Panc1 (cell line): ENCODE measurements at regions of chr4 and their contacts with region 1.

Region 1: DNA sequence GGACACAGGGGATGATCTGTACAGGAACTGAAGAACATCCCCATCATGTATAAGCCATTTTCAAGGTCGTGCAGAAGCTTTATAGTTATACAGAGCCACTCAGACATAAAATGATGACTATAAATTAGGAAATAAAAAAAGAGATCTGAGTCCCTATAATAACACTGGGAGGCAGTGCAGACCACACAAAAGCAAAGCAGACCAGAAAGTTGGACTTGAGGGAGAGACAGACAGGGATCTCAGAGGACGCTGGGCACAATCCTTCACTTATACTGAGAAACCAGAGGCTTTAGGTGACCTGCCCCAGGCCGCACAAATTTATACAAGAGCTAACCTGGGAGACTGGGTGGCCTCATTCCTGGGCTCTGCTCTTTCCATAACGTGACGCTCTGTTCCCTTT is 70.5 kb downstream of the HADH start:
- DNase-seq: peak; percentile 45
- ATAC-seq: peak; percentile 82
- H3K4me3 ChIP-seq: no peak overlapping the region
- H3K27ac ChIP-seq: no peak overlapping the region
- H3K4me1 ChIP-seq: no peaks in the 10 kb centered on the region
- H3K27me3 ChIP-seq: no peaks in the 10 kb centered on the region
- CTCF ChIP-seq: peak; percentile 53

Region 2: GRCh38 chr4:108570993-108571569 is 510.9 kb after region 1 on chr4:
- CTCF ChIA-PET with region 1: interaction called, 4 read pairs
- POLR2A ChIA-PET with region 1: interaction called, 5 read pairs
- in situ Hi-C with region 1: no loop called
- intact Hi-C with region 1: loop called (anchors 10 kb)
- DNase-seq: no peak
- ATAC-seq: no peak
- H3K4me3 ChIP-seq: no peak overlapping the region
- H3K27ac ChIP-seq: no peak overlapping the region
- H3K4me1 ChIP-seq: no peaks in the 10 kb centered on the region
- H3K27me3 ChIP-seq: peaks cover 4% of the 10 kb centered on the region; the same call in 1 of the 2 replicates
- CTCF ChIP-seq: no peak